ENCODE measurements at regions of chr11 and their contacts with region 1.

Region 1: GRCh38 chr11:662689-663274 is 25.7 kb downstream of the DRD4 start:
- DNase-seq: no peak
- ATAC-seq: peak; percentile 96
- H3K4me3 ChIP-seq: no peak overlapping the region
- H3K27ac ChIP-seq: no peak overlapping the region
- H3K4me1 ChIP-seq: peaks cover 13% of the 10 kb centered on the region
- H3K27me3 ChIP-seq: no peaks in the 10 kb centered on the region
- CTCF ChIP-seq: peak; percentile 72 to 80 (median 75)
- EP300 ChIP-seq: no peak
- POLR2A ChIP-seq: no peak
- RAD21 ChIP-seq: peak; percentile 59

Region 2: GRCh38 chr11:565921-566509 is 96.8 kb before region 1 on chr11:
- CTCF ChIA-PET with region 1: no interaction called
- POLR2A ChIA-PET with region 1: interaction called, 13 read pairs
- RAD21 ChIA-PET with region 1: no interaction called
- SMC1A ChIA-PET with region 1: no interaction called
- in situ Hi-C with region 1: no loop called
- intact Hi-C with region 1: no loop called
- DNase-seq: no peak
- ATAC-seq: no peak
- H3K4me3 ChIP-seq: 0 out of 2 replicates have a peak overlapping the region, but pooled peaks have one; percentile 97
- H3K27ac ChIP-seq: no peak overlapping the region
- H3K4me1 ChIP-seq: peaks cover 13% of the 10 kb centered on the region
- H3K27me3 ChIP-seq: no peaks in the 10 kb centered on the region
- CTCF ChIP-seq: peak in 1 of 3 experiments; percentile 5; a peak in 2 of 6 replicates
- EP300 ChIP-seq: no peak
- POLR2A ChIP-seq: no peak; the same call in 1 of the 2 replicates
- RAD21 ChIP-seq: no peak

Region 3: GRCh38 chr11:587978-588380 is 74.8 kb before region 1 on chr11:
- CTCF ChIA-PET with region 1: no interaction called
- POLR2A ChIA-PET with region 1: no interaction called
- RAD21 ChIA-PET with region 1: no interaction called
- SMC1A ChIA-PET with region 1: no interaction called
- in situ Hi-C with region 1: no loop called
- intact Hi-C with region 1: no loop called
- DNase-seq: no peak
- ATAC-seq: no peak
- H3K4me3 ChIP-seq: no peak overlapping the region
- H3K27ac ChIP-seq: no peak overlapping the region
- H3K4me1 ChIP-seq: no peaks in the 10 kb centered on the region
- H3K27me3 ChIP-seq: no peaks in the 10 kb centered on the region
- CTCF ChIP-seq: no peak
- EP300 ChIP-seq: no peak
- POLR2A ChIP-seq: no peak
- RAD21 ChIP-seq: no peak